Posterior vena cava (tissue), 2 donors: ENCODE measurements at regions of chr2 and their contacts with region 1.

Region 1: DNA sequence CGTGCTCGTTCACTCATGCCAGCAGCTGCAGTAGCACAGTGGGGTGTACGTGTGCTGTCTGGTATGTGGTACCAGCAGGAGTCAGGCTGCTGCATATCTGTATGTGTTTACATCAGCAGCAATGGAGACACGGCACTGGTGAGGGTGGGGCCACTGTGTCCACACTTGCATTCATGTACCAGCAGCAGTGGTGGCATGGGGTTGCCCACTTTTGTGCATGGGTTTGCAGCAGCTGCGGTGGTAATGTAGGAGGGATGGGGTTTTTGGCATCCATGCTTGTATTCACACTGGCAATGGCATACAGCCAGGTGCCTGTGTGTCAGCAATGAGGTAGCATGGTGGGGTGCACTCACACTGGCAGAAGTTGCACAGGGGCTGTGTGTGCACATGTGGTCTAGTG is 187.8 kb downstream of the KCNJ3 start:
- DNase-seq: no peak

Region 2: GRCh38 chr2:153497938-153498629 is 1388.2 kb before region 1 on chr2:
- intact Hi-C with region 1: no loop called
- DNase-seq: no peak

Region 3: DNA sequence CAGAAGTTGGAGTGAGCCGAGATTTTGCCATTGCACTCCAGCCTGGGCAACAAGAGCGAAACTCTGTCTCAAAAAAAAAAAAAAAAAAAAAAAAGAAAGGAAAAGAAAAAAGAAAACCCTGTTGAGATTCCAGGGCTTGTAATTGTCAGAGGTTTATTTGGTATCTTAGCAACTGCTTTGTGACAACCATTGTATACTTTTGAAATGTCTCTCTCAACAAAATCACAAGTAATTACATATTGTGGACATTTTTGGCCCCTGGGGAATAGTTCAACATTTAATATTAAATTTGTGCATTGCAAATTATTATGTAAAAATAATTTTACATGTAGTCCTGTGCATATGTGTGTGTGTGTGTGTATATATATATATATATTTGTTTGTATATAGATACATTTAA is 743.8 kb before region 1 on chr2:
- intact Hi-C with region 1: loop called in 1 of 2 experiments (anchors 5 kb)
- DNase-seq: no peak

Region 4: DNA sequence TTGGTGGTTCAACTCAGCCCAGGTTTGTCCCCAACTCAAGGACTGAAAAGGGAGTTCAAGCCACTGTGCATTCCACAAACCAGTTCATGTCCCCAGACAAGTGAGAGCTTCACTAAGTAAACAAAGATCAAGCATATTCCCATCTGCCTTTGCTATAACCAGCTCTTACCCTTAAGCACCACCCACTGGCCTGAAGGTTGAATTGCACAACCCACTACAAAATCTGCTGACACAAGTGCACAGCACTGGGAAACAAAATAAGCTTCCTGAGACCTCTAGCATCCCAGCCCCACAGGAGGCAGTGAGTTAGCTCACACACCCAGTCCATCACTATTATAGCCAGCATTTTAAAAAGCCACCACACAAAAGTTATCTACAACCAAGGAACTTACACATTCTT is 929.6 kb after region 1 on chr2:
- intact Hi-C with region 1: no loop called
- DNase-seq: peak; percentile 43